PC-9 (cell line): ENCODE measurements at regions of chr17 and their contacts with region 1.

Region 1: GRCh38 chr17:13194887-13195286 is 177.1 kb upstream of the ELAC2 start:
- DNase-seq: no peak
- H3K4me3 ChIP-seq: no peak overlapping the region
- H3K27ac ChIP-seq: no peak overlapping the region
- H3K4me1 ChIP-seq: no peaks in the 10 kb centered on the region
- H3K27me3 ChIP-seq: no peaks in the 10 kb centered on the region
- CTCF ChIP-seq: no peak

Region 2: DNA sequence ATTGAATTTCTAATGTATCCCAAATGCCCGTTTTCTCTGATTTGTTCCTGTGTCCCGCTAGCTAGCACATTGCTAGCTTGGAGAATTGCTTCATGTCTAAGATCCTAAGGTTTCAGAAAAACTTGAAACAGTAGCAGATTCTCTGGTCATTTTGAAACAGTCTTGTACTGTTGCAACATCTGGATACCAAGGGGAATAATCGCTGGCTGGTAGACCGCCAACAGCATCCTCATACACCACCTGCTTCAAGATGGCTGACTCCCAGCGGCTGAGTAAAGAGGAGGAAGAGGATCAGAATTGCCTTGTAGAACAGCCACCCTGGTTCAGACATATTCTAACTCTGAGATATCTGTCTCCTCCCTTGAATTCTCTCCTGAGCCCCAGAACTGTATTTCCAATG is 49.6 kb after region 1 on chr17:
- CTCF ChIA-PET with region 1: no interaction called
- POLR2A ChIA-PET with region 1: no interaction called
- intact Hi-C with region 1: no loop called
- DNase-seq: no peak
- H3K4me3 ChIP-seq: no peak overlapping the region
- H3K27ac ChIP-seq: no peak overlapping the region
- H3K4me1 ChIP-seq: no peaks in the 10 kb centered on the region
- H3K27me3 ChIP-seq: peaks cover 18% of the 10 kb centered on the region
- CTCF ChIP-seq: no peak

Region 3: GRCh38 chr17:13297183-13297582 is 102.3 kb after region 1 on chr17:
- CTCF ChIA-PET with region 1: no interaction called
- POLR2A ChIA-PET with region 1: no interaction called
- intact Hi-C with region 1: no loop called
- DNase-seq: no peak
- H3K4me3 ChIP-seq: no peak overlapping the region
- H3K27ac ChIP-seq: no peak overlapping the region
- H3K4me1 ChIP-seq: no peaks in the 10 kb centered on the region
- H3K27me3 ChIP-seq: no peaks in the 10 kb centered on the region
- CTCF ChIP-seq: no peak

Region 4: GRCh38 chr17:13626703-13627102 is 431.8 kb after region 1 on chr17:
- CTCF ChIA-PET with region 1: interaction called, 14 read pairs
- POLR2A ChIA-PET with region 1: no interaction called
- intact Hi-C with region 1: no loop called
- DNase-seq: no peak
- H3K4me3 ChIP-seq: no peak overlapping the region
- H3K27ac ChIP-seq: no peak overlapping the region
- H3K4me1 ChIP-seq: no peaks in the 10 kb centered on the region
- H3K27me3 ChIP-seq: no peaks in the 10 kb centered on the region
- CTCF ChIP-seq: no peak